Naive thymus-derived CD8-positive, alpha-beta T cell (primary cell): ENCODE measurements at regions of chr14 and their contacts with region 1.

Region 1: DNA sequence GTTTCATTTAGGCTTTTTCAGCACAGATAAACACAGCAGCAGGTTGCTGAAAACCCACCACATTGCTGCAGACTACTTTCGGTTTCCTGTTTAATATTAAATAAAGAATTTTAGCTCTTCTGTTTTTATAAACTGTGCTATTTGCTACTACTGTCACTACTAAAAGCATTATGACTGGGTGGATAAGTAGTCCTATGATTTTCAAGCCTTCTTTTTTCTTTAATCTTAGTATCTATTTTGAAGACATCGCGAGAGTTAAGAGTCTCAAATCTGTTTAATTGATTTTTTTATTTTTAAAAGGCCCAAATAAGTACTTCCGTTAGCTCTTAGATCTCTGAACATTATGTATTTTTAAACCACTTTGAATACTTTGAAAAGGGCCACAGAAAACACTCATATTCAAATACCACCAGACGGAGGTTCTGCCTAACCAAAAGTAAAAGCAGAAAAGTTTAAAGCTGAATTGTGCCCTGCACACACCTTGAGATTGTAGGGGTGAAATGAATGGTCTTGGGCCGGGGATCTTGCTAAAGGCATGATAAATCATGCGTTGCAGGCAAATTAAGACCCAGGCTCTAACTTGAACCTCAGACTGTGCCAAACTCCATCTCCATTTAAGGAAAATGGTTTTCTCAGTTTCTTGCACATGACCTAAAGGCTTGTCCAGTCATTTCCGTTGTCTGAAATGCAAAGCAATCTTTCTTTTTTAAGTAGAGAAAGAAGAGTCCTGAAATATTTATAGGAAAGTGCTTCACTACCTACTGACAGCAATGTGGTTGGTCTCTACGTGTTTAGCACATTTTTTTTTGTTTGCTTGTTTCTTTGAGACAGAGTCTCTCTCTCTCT is 13.6 kb upstream of the FOXN3 start:
- DNase-seq: peak in 8 of 10 donors; percentile 6 to 85 (median 36)
- ATAC-seq: peak; percentile 85 to 91
- H3K4me3 Mint-ChIP-seq: peak overlapping the region; percentile 65 to 88 (median 80)
- H3K27ac Mint-ChIP-seq: peak overlapping the region; percentile 59 to 94 (median 86)
- H3K4me1 Mint-ChIP-seq: peaks cover 19 to 84% (median 58%) of the 10 kb centered on the region in 4 donors
- H3K27me3 Mint-ChIP-seq: no peaks in the 10 kb centered on the region

Region 2: GRCh38 chr14:89060191-89060590 is 370.4 kb before region 1 on chr14:
- POLR2A ChIA-PET with region 1: no interaction called
- DNase-seq: no peak
- ATAC-seq: no peak
- H3K4me3 Mint-ChIP-seq: no peak overlapping the region
- H3K27ac Mint-ChIP-seq: peak overlapping the region in 1 of 10 donors; percentile 3
- H3K4me1 Mint-ChIP-seq: no peaks in the 10 kb centered on the region
- H3K27me3 Mint-ChIP-seq: peaks cover 3 to 13% (median 8%) of the 10 kb centered on the region in 5 donors

Region 3: DNA sequence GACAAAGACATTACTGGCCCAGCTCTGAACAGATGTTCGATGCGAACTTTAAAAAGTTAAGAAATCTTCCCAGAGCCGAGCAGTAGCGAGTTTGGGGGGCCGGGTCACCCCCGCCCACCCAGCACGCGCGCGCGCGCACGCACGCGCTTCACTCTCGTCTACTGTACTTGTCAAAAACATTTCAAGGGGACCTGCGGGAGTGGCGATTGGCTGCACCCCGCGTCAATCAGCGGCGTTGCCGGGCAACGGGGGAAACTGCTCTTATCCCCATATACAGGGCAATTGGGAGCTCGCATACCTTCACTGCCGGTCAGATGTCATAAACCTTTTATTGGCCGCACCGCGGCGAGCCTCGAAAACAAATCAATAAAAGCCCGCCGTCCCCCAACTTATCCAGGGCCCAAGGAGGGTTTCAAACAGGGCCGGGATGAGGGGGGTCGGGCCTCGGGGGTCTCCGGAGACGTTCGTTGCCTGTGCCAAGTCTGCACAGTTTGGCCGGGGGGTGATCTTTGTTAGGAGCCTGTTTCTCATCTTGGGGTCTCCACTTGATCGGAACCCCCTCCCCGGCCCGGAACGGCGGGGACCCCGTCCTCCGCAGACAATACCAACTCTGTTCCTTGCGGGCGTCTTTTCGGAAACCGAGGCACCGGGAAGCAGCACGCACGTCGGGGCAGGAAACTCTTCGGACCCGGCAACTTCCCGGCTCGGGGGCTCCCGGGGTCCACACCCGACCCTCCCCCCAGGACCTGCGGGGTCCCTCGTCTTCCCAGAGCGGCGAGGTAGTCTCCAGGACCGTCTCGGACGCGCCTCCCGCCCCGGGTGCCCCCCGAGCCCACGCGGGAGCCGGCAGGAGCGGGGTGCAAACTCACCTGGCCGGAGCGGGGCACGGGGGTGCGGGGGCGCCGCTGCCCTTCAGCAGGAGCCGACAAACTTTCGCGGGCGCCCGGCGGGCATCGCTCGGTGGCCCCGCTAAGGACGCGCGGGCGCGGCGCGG is 14.3 kb before region 1 on chr14:
- POLR2A ChIA-PET with region 1: interaction called, 12 read pairs
- DNase-seq: peak; percentile 97 to 100 (median 99)
- ATAC-seq: peak; percentile 73 to 79
- H3K4me3 Mint-ChIP-seq: peak overlapping the region; percentile 85 to 98 (median 94)
- H3K27ac Mint-ChIP-seq: peak overlapping the region; percentile 86 to 98 (median 93)
- H3K4me1 Mint-ChIP-seq: peaks cover 36 to 66% (median 63%) of the 10 kb centered on the region in 4 donors
- H3K27me3 Mint-ChIP-seq: no peaks in the 10 kb centered on the region

Region 4: GRCh38 chr14:89444044-89444443 is 13.4 kb after region 1 on chr14:
- POLR2A ChIA-PET with region 1: interaction called, 11 read pairs
- DNase-seq: no peak
- ATAC-seq: peak in 1 of 2 donors; percentile 28
- H3K4me3 Mint-ChIP-seq: peak overlapping the region; percentile 40 to 79 (median 74)
- H3K27ac Mint-ChIP-seq: peak overlapping the region; percentile 69 to 96 (median 83)
- H3K4me1 Mint-ChIP-seq: peaks cover 32 to 86% (median 79%) of the 10 kb centered on the region in 4 donors
- H3K27me3 Mint-ChIP-seq: no peaks in the 10 kb centered on the region